ENCODE measurements at regions of chr4 and their contacts with region 1.

Region 1: DNA sequence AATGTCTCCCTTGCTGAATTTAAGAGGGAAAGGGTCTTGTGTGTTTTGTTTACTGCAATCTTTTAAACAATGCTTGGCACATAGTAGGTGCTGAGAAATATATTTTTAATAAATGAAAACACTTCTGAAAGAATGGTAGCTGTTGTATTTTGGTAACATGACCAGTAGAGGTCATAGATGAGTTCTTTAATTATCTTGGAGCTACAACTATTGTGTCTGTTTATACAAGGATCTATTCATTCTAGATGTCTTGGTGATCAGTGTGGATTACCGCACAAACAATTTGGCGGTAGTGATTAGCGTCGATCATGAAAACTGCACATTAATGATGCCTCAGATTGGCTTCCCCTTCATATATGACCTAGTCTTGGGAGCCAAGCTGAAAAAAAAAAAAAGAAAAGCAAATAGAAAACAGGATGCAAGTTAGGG is 21.4 kb upstream of the SCRG1 start:
- DNase-seq: peak; percentile 30
- CTCF ChIP-seq: peak; percentile 32

Region 2: GRCh38 chr4:173013232-173013930 is 407.0 kb before region 1 on chr4:
- in situ Hi-C with region 1: loop called (anchors 10 kb)
- DNase-seq: peak; percentile 53
- CTCF ChIP-seq: peak; percentile 64

Region 3: DNA sequence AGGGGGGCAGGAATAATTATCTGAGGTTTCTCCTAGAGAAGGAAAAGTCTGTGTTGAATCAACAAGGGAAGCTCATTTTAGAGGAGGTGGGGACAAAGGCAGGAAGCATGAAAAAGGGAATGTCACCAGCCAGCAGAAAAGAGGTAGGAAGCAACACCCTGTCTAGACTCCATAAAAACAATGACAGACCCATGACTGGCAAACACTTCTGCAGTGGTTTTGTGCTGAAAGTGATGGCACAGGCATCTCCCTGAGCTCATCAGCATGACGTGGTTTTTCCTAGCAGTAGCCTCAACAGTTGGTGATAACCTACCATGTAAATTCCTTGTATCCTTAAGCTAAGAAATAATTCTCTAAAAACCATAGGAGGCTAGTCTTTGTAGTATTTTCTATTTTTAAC is 362.4 kb before region 1 on chr4:
- in situ Hi-C with region 1: no loop called
- DNase-seq: no peak
- CTCF ChIP-seq: no peak

Region 4: GRCh38 chr4:173538148-173538908 is 118.0 kb after region 1 on chr4:
- in situ Hi-C with region 1: no loop called
- DNase-seq: no peak
- CTCF ChIP-seq: no peak

Region 5: DNA sequence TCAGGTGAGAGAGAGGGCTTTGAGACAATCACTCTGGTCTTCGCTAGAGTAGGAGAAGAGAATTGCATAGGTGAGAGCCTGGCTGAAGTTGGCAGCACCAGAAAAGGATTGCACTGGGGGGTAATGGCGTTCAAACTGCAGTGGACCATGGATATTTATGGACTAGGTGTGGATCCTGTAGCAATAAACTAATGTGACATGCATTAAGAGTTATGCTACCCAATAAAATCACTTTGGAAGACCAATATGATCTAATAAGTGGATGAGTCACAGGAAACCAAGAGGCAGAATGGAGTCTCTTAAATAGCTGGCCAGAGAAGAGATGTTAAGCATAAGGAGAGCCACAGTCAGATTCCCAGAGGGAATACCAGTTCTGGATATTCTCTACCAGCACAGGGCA is 603.3 kb after region 1 on chr4:
- in situ Hi-C with region 1: no loop called
- DNase-seq: no peak
- CTCF ChIP-seq: no peak